A549 (cell line): ENCODE measurements at regions of chr7 and their contacts with region 1.

Region 1: GRCh38 chr7:149125863-149126661 is at the start of gene ZNF425:
- DNase-seq: peak; percentile 89 to 94
- ATAC-seq: peak; percentile 85 to 91
- H3K4me3 ChIP-seq: peak within 1 kb of the TSS; percentile 99
- H3K27ac ChIP-seq: peak within 1 kb of the TSS; percentile 95 to 96
- H3K4me1 ChIP-seq: peaks cover 14% of the 10 kb centered on the region
- CTCF ChIP-seq: peak; percentile 94
- EP300 ChIP-seq: no peak
- POLR2A ChIP-seq: peak; percentile 98
- RAD21 ChIP-seq: peak; percentile 34; a peak in 2 of 5 replicates
- polyA plus RNA-seq, gene ZNF425: 0.80 and 1.0 TPM in 2 replicates

Region 2: DNA sequence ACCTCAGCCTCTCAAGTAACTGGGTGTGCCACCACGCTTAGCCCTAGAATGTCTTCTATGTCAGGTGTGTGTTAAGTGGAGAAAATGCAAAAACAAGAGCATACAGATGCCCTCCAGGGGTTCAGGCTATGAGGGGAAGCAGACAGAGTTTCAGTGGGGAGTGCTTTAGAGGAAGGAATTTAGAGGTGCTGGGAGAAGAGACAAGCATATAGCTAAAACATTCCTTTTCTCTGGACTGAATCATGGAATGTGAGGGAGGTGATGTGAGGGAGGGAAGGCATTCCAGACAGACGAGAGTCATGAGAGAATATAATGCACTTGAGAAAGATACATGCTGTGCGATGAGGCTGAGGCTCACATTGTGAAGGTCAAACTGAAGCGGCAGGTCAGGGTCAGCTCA is 29.0 kb before region 1 on chr7:
- CTCF ChIA-PET with region 1: interaction called, 12 read pairs
- POLR2A ChIA-PET with region 1: interaction called, 3 read pairs
- DNase-seq: no peak
- ATAC-seq: peak; percentile 54 to 57; a peak in 4 of 6 replicates
- H3K4me3 ChIP-seq: no peak overlapping the region
- H3K27ac ChIP-seq: no peak overlapping the region
- H3K4me1 ChIP-seq: no peaks in the 10 kb centered on the region
- CTCF ChIP-seq: no peak
- EP300 ChIP-seq: no peak
- POLR2A ChIP-seq: no peak
- RAD21 ChIP-seq: no peak

Region 3: GRCh38 chr7:149104749-149105148 is 21.3 kb before region 1 on chr7:
- CTCF ChIA-PET with region 1: interaction called, 32 read pairs
- POLR2A ChIA-PET with region 1: interaction called, 3 read pairs
- DNase-seq: no peak
- ATAC-seq: peak; percentile 13 to 37; a peak in 3 of 6 replicates
- H3K4me3 ChIP-seq: no peak overlapping the region
- H3K27ac ChIP-seq: no peak overlapping the region
- H3K4me1 ChIP-seq: no peaks in the 10 kb centered on the region
- CTCF ChIP-seq: no peak
- EP300 ChIP-seq: no peak
- POLR2A ChIP-seq: no peak
- RAD21 ChIP-seq: no peak

Region 4: GRCh38 chr7:149180722-149181449 is 54.8 kb after region 1 on chr7:
- CTCF ChIA-PET with region 1: interaction called, 10 read pairs
- POLR2A ChIA-PET with region 1: no interaction called
- DNase-seq: no peak
- ATAC-seq: no peak
- H3K4me3 ChIP-seq: no peak overlapping the region
- H3K27ac ChIP-seq: no peak overlapping the region
- H3K4me1 ChIP-seq: no peaks in the 10 kb centered on the region
- CTCF ChIP-seq: no peak
- EP300 ChIP-seq: no peak
- POLR2A ChIP-seq: no peak
- RAD21 ChIP-seq: no peak

Region 5: DNA sequence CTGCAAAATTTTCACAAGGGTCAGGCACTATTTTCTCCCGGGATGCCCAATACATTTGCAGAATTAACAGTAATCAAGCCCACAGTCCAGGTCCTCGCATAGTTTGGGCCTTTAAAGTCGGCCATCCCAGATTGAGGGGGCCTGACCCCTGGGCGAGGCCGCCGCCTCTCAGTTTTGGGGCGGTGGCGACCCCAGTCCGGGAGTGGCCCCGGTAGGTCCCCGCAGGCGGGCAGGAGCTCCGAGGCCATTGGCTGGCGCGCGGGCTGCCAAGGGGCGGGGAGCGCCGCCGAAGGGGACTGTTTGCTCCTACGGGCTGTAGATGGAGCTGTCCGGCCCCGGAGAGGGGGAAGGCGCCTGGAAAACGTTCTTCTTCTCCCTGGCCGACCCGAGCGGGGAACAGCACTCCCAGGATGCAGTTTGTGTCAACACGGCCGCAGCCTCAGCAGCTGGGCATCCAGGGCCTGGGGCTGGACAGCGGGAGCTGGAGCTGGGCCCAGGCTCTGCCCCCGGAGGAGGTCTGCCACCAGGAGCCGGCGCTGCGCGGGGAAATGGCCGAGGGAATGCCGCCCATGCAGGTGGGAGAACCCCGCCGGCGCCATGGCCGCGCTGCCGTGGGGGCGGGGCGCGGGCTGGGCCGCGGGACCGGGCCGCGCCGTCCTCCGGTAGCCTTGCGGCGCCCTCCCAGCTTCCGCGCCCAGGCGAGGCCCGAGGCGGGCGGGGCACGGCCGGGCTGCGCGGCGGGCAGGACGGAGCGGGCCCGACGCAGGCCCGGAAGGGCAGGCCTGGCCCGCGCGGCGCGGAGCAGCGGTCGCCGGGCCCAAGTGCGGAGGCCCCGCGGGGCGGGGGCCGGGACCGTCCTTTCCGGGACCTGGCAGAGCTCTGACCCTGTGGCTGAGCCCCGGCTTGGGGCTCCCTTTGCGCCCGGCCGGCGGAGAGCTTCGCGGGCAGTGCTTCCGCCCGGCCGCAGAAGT is 69.4 kb after region 1 on chr7 and contains the start of gene ZNF282:
- CTCF ChIA-PET with region 1: interaction called, 19 read pairs
- POLR2A ChIA-PET with region 1: interaction called, 4 read pairs
- DNase-seq: peak; percentile 92 to 96
- ATAC-seq: peak; percentile 98 to 99
- H3K4me3 ChIP-seq: peak within 1 kb of the TSS; percentile 77
- H3K27ac ChIP-seq: peak within 1 kb of the TSS; percentile 93 to 94
- H3K4me1 ChIP-seq: peaks cover 14% of the 10 kb centered on the region; the same call in 1 of the 3 replicates
- CTCF ChIP-seq: peak; percentile 71
- EP300 ChIP-seq: no peak
- POLR2A ChIP-seq: peak; percentile 57
- RAD21 ChIP-seq: peak; percentile 41 to 53; a peak in 4 of 5 replicates
- polyA plus RNA-seq, gene ZNF282: 8.8 and 11.9 TPM in 2 replicates

Region 6: DNA sequence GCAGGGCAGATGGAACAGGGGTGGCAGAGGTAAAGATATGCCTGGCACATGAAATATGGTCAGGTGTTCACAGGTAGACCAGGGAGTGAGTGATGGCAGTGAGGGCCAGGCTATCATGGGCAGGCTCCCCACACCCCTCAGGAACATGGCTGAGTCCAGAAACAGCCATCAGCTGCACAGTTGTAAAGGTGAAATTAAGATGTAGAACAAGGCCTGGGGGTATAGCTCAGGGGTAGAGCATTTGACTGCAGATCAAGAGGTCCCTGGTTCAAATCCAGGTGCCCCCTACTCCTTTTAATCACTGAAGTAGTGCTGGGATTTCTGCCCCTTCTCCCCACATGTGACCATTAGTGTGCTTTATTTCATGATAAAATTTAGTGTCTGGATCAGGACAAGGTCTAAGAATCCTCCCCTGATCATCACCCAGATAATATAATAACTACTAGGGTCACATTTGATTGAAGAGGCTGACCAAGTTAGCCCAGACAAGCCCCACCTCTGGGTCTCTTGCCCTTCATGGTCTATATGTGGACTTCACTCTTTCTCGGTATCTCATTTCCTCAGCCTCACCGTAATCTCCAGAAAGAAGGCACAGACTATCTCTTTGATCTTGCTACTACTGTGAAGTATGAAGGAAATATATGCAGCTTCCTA is 205.0 kb after region 1 on chr7:
- CTCF ChIA-PET with region 1: no interaction called
- POLR2A ChIA-PET with region 1: no interaction called
- DNase-seq: peak in 1 of 2 experiments; percentile 19
- ATAC-seq: peak; percentile 54 to 86
- H3K4me3 ChIP-seq: no peak overlapping the region
- H3K27ac ChIP-seq: no peak overlapping the region
- H3K4me1 ChIP-seq: no peaks in the 10 kb centered on the region
- CTCF ChIP-seq: no peak
- EP300 ChIP-seq: no peak
- POLR2A ChIP-seq: no peak
- RAD21 ChIP-seq: no peak

Region 7: GRCh38 chr7:149404825-149405224 is 278.8 kb after region 1 on chr7:
- CTCF ChIA-PET with region 1: no interaction called
- POLR2A ChIA-PET with region 1: no interaction called
- DNase-seq: no peak
- ATAC-seq: peak in 1 of 2 experiments; percentile 33; a peak in 2 of 6 replicates
- H3K4me3 ChIP-seq: no peak overlapping the region
- H3K27ac ChIP-seq: no peak overlapping the region
- H3K4me1 ChIP-seq: no peaks in the 10 kb centered on the region
- CTCF ChIP-seq: no peak
- EP300 ChIP-seq: no peak
- POLR2A ChIP-seq: no peak
- RAD21 ChIP-seq: no peak